Posterior cingulate gyrus (tissue), 11 donors: ENCODE measurements at regions of chr3 and their contacts with region 1.

Region 1: DNA sequence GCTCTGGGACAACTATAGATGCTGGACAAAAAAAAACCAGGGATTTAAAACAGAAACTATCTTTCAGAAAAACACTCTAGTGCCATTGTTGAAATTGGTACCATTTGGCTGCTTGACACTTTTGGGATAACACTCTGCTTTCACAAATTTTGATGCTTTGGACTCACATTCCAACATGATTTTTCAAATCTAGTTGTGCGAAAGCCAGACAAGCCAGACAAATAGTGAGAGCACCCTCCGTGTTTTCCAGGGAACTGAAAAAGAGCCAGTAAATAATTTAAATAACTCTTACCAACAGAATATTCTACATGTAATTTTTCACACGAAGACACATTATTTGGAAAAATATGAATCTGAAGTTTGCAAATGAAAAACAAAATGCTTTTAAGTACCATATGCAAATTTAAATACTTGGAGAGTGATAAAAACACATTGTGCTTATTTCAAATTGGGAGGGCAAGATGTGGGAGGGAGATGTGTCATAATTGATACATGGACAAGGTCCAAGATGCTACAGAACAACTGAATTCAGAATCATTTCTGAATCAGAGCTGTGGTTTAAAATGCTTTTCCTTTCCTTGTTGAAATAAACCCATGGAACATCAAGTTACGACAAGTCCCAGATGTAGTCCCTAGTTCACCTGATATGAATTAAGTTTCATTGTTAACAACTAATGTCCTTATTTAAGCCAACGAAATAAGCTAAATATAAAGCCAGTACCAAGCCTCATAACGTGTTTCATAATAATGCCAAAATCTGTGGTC is 144.2 kb upstream of the SOX2 start:
- DNase-seq: no peak

Region 2: DNA sequence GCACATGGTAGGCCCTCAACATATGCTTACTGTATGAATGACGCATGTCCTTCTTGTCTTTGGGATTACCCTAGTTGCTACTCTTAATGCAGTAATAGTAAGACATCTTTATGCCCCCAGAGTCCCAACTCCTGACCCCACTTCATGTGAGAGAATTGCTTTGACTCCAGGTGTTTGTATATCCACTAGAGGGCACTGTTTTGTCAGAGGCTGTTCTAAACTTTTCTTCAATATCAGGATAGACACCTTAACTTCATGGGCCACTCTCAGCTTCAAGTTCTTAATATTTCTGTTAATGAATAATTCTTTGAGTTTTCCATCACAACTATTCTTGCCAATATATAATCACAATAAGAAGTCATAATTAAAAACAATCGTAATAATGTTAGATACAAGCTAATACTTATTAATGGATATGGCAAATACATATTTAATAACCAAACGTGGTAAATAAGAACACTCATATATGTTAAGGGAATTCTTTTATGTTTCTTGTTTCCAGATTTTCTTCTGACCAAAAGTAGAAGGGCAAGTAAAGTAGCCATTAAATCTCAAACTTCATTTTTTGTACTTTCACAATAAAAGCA is 240.8 kb before region 1 on chr3:
- intact Hi-C with region 1: loop called (anchors 10 kb)
- DNase-seq: no peak

Region 3: DNA sequence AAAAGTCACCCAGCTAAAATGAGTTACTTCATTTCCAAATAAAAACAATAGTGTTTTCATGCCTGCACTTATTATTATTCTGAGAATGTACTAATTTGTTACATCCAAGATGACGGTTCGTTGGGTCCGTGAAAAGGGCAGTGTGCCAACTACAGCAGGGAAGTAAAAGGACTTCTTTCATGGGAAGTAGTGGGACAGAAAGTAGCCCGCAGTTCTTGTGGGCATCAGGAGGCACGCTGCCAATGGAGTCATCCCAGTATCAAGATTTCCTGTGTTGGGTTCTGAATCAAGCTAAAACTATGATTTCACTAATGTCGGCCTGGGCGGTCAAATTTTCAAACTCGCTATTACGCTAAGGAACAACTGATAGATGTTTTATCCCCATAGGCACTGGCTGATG is 110.3 kb before region 1 on chr3:
- intact Hi-C with region 1: loop called (anchors 5 kb)
- DNase-seq: peak; percentile 69 to 97 (median 88)

Region 4: GRCh38 chr3:181610083-181610972 is 42.8 kb after region 1 on chr3:
- intact Hi-C with region 1: loop called (anchors 5 kb)
- DNase-seq: no peak

Region 5: DNA sequence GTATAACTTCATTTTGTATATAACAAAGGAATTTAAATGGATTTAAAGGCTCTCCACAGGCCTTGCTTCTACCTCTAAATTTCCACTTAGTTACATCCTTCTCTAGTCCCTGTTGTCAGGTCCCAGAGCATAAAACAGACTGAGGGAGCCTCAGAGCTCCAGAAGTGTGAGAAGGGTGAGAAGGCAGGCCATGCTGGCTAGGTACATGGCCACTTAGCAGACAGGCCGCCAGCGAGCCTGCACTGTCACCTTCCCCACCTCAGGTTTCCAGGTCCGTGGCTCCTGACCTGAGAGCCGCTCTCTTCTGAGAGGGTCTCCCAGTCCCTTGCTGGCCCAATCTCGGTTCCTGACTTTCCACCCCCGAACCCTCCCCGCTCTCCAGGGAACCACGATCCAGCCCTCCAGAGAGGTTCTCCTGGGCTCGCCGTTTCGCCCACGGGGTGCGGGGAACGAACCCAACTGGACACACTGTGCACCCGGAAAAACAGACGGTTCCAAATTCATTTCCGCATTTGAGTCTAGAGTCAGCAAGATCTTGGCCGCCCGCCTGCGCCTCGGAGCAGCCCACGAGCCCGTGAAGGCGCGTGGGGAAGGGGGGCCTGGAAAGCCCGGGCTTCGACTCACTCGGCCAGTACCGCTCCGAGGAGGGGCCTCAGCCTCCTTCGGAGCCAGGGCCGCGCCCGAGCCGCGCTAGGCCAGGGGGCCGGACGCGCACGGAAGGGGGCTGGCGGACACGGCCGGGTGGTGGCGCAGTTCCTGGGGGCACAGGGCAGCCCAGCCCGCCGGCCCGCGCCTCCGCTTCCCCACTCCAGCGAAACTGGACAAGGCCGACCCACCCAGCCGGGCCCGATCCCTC is 127.5 kb after region 1 on chr3:
- intact Hi-C with region 1: loop called (anchors 5 kb)
- DNase-seq: peak in 9 of 10 donors; percentile 42 to 95 (median 72)